K562 (cell line): ENCODE measurements at regions of chr3 and their contacts with region 1.

Region 1: GRCh38 chr3:159472611-159473010 is 516.0 kb upstream of the IL12A start:
- DNase-seq: no peak
- ATAC-seq: no peak
- H3K4me3 ChIP-seq: no peak overlapping the region
- H3K27ac ChIP-seq: no peak overlapping the region
- H3K4me1 ChIP-seq: no peaks in the 10 kb centered on the region
- H3K27me3 ChIP-seq: no peaks in the 10 kb centered on the region
- CTCF ChIP-seq: no peak
- EP300 ChIP-seq: no peak
- POLR2A ChIP-seq: no peak
- RAD21 ChIP-seq: no peak

Region 2: GRCh38 chr3:159418571-159419526 is 53.8 kb before region 1 on chr3:
- CTCF ChIA-PET with region 1: no interaction called
- POLR2A ChIA-PET with region 1: no interaction called
- in situ Hi-C with region 1: no loop called
- intact Hi-C with region 1: no loop called
- DNase-seq: no peak
- ATAC-seq: no peak
- H3K4me3 ChIP-seq: no peak overlapping the region
- H3K27ac ChIP-seq: no peak overlapping the region
- H3K4me1 ChIP-seq: no peaks in the 10 kb centered on the region
- H3K27me3 ChIP-seq: no peaks in the 10 kb centered on the region
- CTCF ChIP-seq: no peak
- EP300 ChIP-seq: no peak
- POLR2A ChIP-seq: no peak
- RAD21 ChIP-seq: no peak

Region 3: DNA sequence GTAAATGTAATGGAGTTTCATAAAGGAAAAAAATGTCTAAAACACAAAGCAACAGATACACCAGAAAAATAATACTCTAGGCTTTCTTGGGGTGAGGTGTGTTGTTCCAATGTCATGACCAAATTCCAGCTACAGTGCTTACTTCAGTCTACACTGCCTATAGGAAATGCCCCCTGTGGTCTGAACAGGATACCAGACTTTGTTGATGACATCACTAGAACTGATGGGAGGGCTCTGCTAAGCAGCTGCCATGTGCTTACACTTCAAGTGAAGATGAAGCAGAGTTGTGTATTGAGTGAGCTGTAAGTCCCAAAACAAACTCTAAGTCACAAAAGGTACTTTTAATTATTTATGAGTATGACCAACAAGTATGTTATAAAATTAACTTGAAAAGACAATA is 60.0 kb after region 1 on chr3:
- CTCF ChIA-PET with region 1: no interaction called
- POLR2A ChIA-PET with region 1: no interaction called
- in situ Hi-C with region 1: no loop called
- intact Hi-C with region 1: loop called (anchors 1 kb)
- DNase-seq: no peak
- ATAC-seq: no peak
- H3K4me3 ChIP-seq: no peak overlapping the region
- H3K27ac ChIP-seq: no peak overlapping the region
- H3K4me1 ChIP-seq: no peaks in the 10 kb centered on the region
- H3K27me3 ChIP-seq: no peaks in the 10 kb centered on the region
- CTCF ChIP-seq: no peak
- EP300 ChIP-seq: no peak
- POLR2A ChIP-seq: no peak
- RAD21 ChIP-seq: no peak